SK-N-SH (cell line): ENCODE measurements at regions of chr4 and their contacts with region 1.

Region 1: DNA sequence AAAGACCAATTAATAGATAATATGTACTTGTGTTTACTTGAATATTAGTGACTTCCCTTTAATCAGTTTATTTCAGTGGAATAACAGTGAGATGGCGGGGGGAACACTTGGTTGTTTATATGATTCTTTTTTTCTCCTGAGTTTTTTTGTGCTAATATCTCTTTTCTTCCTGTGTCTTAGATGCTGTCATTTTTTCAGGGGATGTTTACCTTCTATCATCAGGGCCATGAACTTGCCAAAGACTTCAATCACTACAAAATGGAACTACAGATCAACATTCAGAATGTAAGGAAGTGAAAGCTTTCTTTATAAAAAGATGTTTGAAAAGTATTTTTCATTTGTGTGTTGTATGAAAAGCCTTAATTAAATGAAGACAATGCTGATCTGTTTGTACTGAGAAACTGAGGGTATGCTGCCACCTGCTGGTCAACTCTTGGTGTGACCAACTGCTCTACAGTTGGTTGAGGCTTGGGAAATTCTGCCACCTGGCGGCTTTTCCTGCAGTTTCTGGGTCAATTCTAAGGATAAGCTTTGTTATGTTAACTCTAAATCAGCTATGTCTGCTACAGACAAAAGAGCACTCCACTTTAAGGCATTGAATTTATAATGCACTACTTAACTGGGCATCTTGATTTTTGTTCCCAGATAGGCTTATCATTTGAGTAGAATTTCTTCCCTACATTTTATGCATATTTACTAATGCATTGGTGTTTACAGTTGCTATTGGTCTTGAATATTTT is 134.8 kb downstream of the ARHGAP10 start:
- DNase-seq: peak; percentile 72
- H3K4me3 ChIP-seq: peak overlapping the region in 1 of 2 experiments; percentile 48; a peak in 1 of 4 replicates
- H3K27ac ChIP-seq: peak overlapping the region in 1 of 2 experiments; percentile 58; a peak in 1 of 4 replicates
- H3K4me1 ChIP-seq: peaks cover 12 to 30% of the 10 kb centered on the region in 2 experiments; a peak in 2 of 4 replicates
- H3K27me3 ChIP-seq: no peaks in the 10 kb centered on the region
- CTCF ChIP-seq: peak; percentile 100
- EP300 ChIP-seq: no peak
- RAD21 ChIP-seq: peak; percentile 100

Region 2: GRCh38 chr4:147596981-147597380 is 269.7 kb before region 1 on chr4:
- CTCF ChIA-PET with region 1: interaction called, 40 read pairs
- POLR2A ChIA-PET with region 1: no interaction called
- DNase-seq: no peak
- H3K4me3 ChIP-seq: no peak overlapping the region
- H3K27ac ChIP-seq: peak overlapping the region; percentile 14 to 63; a peak in 1 of 4 replicates
- H3K4me1 ChIP-seq: peaks cover 10 to 17% of the 10 kb centered on the region in 2 experiments; a peak in 2 of 4 replicates
- H3K27me3 ChIP-seq: no peaks in the 10 kb centered on the region
- CTCF ChIP-seq: no peak
- EP300 ChIP-seq: 0 out of 4 replicates have a peak, but pooled peaks of 1 of the 2 experiments have one; percentile 18
- RAD21 ChIP-seq: no peak

Region 3: GRCh38 chr4:147658501-147658900 is 208.2 kb before region 1 on chr4:
- CTCF ChIA-PET with region 1: interaction called, 10 read pairs
- POLR2A ChIA-PET with region 1: no interaction called
- DNase-seq: no peak
- H3K4me3 ChIP-seq: no peak overlapping the region
- H3K27ac ChIP-seq: no peak overlapping the region
- H3K4me1 ChIP-seq: no peaks in the 10 kb centered on the region
- H3K27me3 ChIP-seq: no peaks in the 10 kb centered on the region
- CTCF ChIP-seq: no peak
- EP300 ChIP-seq: no peak
- RAD21 ChIP-seq: no peak

Region 4: DNA sequence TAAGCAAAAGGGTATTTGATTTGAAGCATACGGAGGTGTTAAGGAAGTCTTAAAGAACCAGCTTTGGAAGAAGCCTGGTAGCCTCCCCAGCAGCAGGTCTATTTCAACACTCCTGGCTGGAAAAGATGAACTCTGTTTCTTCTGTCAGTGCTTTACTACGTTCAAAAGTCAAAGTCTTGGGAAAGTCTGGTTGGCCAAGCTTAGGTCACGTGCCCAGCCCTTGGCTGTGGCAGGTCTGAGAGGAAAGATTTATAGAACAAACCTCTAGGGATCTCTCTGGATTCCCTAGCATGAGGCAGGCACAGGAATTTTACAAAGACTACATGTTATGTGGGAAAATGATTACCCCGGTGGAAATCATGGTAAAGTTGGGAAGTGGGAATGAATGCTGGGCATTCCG is 143.4 kb before region 1 on chr4:
- CTCF ChIA-PET with region 1: interaction called, 12 read pairs
- POLR2A ChIA-PET with region 1: no interaction called
- DNase-seq: no peak
- H3K4me3 ChIP-seq: no peak overlapping the region
- H3K27ac ChIP-seq: no peak overlapping the region
- H3K4me1 ChIP-seq: no peaks in the 10 kb centered on the region
- H3K27me3 ChIP-seq: no peaks in the 10 kb centered on the region
- CTCF ChIP-seq: no peak
- EP300 ChIP-seq: no peak
- RAD21 ChIP-seq: no peak

Region 5: GRCh38 chr4:147786031-147786430 is 80.7 kb before region 1 on chr4:
- CTCF ChIA-PET with region 1: interaction called, 32 read pairs
- POLR2A ChIA-PET with region 1: interaction called, 5 read pairs
- DNase-seq: no peak
- H3K4me3 ChIP-seq: no peak overlapping the region
- H3K27ac ChIP-seq: peak overlapping the region; percentile 15 to 83; a peak in 3 of 4 replicates
- H3K4me1 ChIP-seq: peaks cover 34 to 46% of the 10 kb centered on the region in 2 experiments
- H3K27me3 ChIP-seq: no peaks in the 10 kb centered on the region
- CTCF ChIP-seq: no peak
- EP300 ChIP-seq: no peak; a peak in 1 of 4 replicates
- RAD21 ChIP-seq: no peak

Region 6: DNA sequence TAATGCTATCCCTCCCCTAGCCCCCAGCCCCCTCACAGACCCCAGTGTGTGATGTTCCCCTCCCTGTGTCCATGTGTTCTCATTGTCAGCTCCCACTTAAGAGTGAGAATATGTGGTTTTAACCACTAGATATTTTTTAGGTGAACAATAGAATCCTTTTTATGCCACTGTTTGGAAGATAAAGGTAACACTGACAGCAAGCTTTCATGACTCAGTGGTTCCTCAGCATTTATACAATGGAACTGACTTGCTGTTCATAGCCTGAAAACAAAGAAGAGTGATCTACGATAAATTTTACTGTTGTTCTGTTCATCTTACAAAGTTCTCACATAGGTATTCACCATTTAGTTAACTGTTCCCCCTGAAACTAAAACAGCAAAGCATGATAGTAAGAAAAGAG is 13.0 kb after region 1 on chr4:
- CTCF ChIA-PET with region 1: interaction called, 33 read pairs
- POLR2A ChIA-PET with region 1: no interaction called
- DNase-seq: no peak
- H3K4me3 ChIP-seq: no peak overlapping the region
- H3K27ac ChIP-seq: peak overlapping the region in 1 of 2 experiments; percentile 30; a peak in 2 of 4 replicates
- H3K4me1 ChIP-seq: peaks cover 0 to 17% of the 10 kb centered on the region in 2 experiments; a peak in 2 of 4 replicates
- H3K27me3 ChIP-seq: no peaks in the 10 kb centered on the region
- CTCF ChIP-seq: no peak
- EP300 ChIP-seq: no peak
- RAD21 ChIP-seq: no peak